Ascending aorta (tissue), 2 donors: ENCODE measurements at regions of chr4 and their contacts with region 1.

Region 1: GRCh38 chr4:123555233-123555806 is 158.7 kb downstream of the SPRY1 start:
- DNase-seq: peak; percentile 21 to 94
- H3K4me3 ChIP-seq: peak overlapping the region in 1 of 2 donors; percentile 56
- H3K27ac ChIP-seq: peak overlapping the region; percentile 83 to 87
- H3K4me1 ChIP-seq: peaks cover 3 to 34% of the 10 kb centered on the region in 2 donors
- H3K27me3 ChIP-seq: no peaks in the 10 kb centered on the region
- CTCF ChIP-seq: no peak

Region 2: DNA sequence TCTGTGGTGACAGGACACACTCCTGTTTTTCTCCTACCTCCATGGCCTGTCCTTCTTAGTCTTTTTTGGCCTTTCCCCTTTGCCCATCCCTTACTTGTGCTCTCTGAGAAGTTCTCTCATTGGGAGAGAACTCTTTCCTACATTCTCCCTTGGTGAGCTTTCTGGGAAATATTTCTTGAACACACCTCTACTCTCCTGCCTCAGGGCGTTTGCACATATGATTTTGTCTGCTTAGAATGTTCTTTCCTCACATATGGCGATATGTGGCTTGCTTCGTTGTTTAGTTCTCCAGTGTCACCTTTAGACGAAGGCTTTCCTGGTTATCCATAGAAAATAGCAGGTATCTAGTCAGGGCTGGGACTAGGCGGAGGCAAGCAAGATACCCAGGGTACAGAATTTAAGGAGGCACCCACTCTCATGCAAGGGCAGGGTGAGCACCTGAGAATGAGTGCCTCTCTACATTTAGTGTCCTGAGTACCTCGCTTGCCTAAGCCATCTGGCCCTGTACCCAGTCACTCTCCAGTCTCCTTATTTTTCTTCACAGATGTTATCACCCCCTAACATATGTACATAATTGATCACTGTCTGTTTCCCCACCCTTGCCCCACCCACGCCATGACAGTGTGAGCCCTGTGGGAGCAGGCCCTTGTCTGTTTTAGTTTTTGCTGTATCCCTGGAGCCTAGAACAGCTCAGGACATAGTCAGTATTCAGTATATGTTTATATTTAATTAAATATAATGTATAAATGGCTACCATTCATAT is 45.3 kb before region 1 on chr4:
- intact Hi-C with region 1: loop called (anchors 2 kb)
- DNase-seq: no peak
- H3K4me3 ChIP-seq: no peak overlapping the region
- H3K27ac ChIP-seq: no peak overlapping the region
- H3K4me1 ChIP-seq: no peaks in the 10 kb centered on the region
- H3K27me3 ChIP-seq: no peaks in the 10 kb centered on the region
- CTCF ChIP-seq: no peak

Region 3: GRCh38 chr4:123631786-123632692 is 76.7 kb after region 1 on chr4:
- intact Hi-C with region 1: no loop called
- DNase-seq: no peak
- H3K4me3 ChIP-seq: no peak overlapping the region
- H3K27ac ChIP-seq: no peak overlapping the region
- H3K4me1 ChIP-seq: no peaks in the 10 kb centered on the region
- H3K27me3 ChIP-seq: no peaks in the 10 kb centered on the region
- CTCF ChIP-seq: no peak

Region 4: DNA sequence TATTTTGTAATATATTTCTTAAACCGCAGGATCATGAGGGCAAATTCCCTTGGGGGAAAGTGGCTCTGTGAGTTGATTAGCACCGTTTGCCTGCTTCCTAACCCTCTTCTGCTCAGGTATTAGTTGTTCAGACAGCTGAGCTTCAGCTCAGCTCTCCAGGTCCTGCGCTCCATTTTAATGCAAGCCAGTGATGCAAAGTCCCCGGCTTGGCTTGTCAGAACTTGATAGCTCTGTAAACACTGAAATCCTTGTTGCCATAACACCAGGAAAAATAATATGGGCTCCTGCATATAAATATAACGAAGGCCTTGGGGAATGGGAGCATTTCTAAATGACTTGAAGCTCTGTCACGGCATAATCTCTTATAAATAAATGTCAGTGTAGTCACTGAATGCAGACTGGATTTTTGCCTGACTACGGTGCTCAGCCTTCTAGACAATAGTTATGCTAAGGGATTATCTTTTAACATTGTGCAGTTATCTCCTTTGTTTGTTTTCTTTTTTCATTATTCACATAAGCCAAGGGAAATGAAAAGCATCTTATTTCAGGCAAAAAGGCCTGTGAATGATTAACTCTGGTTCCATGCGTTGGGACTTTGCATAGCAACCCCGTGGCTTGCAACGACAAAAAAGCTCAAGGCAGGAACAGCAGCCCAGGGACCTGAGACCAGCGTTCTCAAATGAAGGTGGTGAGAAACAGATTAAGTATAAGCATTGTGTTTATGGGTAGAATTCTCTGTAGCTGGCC is 94.5 kb after region 1 on chr4:
- intact Hi-C with region 1: loop called (anchors 2 kb)
- DNase-seq: peak in 1 of 2 donors; percentile 70
- H3K4me3 ChIP-seq: peak overlapping the region; percentile 7 to 17
- H3K27ac ChIP-seq: peak overlapping the region; percentile 73 to 78
- H3K4me1 ChIP-seq: peaks cover 3 to 40% of the 10 kb centered on the region in 2 donors
- H3K27me3 ChIP-seq: no peaks in the 10 kb centered on the region
- CTCF ChIP-seq: no peak

Region 5: GRCh38 chr4:123731035-123731434 is 175.7 kb after region 1 on chr4:
- intact Hi-C with region 1: no loop called
- DNase-seq: no peak
- H3K4me3 ChIP-seq: no peak overlapping the region
- H3K27ac ChIP-seq: no peak overlapping the region
- H3K4me1 ChIP-seq: no peaks in the 10 kb centered on the region
- H3K27me3 ChIP-seq: no peaks in the 10 kb centered on the region
- CTCF ChIP-seq: no peak

Region 6: DNA sequence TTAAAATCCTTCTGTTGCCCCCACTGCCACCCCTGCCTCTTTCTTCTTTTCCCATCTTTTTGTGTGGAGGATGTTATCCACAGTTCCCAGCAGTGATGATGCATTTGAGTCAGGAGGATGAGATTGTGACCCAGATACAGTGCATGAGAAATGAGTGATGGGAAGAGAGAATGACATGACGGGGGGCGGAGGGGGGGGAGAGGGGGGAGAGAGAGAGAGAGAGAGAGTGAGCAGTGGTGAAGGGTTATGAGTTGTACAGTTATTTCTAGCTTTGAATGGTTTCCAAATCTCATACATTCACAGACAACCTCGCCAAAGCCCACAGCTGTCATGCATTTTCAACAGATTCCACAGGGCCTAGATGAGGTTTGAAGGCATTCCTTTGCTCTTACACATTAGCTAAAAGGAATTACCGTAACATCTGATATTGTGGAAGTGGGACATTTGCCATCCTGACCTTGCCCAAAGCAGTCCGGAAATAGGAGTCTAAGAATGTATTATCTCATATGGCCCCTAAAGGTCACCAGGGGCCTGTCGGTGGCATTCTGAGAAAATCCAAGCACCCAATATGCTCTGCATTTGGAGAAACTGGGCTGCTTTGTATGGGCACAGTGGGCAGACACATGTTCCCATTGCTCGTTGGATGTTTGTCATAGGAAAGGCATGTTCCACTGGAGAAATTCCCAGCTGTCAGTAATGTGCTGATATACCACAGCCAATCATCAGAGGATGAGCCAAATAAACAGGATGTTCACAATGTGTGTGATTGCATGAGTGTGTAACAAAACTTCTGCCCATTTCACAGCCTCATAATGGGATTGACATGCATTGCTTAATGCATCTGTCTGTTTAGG is 277.1 kb after region 1 on chr4:
- intact Hi-C with region 1: loop called (anchors 5 kb)
- DNase-seq: peak in 1 of 2 donors; percentile 82
- H3K4me3 ChIP-seq: no peak overlapping the region
- H3K27ac ChIP-seq: peak overlapping the region; percentile 56 to 76
- H3K4me1 ChIP-seq: peaks cover 3 to 19% of the 10 kb centered on the region in 2 donors
- H3K27me3 ChIP-seq: no peaks in the 10 kb centered on the region
- CTCF ChIP-seq: no peak

Region 7: DNA sequence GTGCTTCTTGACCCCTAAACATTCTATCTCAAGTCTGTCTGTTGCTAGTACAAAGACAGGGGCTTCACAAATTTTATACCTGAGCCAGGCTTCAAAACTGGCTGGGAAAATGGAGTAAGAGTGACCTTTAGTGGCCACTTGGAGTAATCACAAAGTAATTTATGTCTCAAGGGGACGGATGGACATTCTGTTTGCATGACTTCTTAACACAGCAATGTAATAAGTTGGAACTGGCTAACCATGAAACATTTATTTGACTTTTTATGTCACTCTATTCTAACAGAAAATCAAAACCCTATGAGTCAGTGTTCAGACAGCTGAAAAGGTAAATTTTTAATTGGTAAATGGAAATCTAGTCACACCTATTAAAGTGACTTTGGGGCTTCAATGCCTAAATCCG is 556.6 kb after region 1 on chr4:
- intact Hi-C with region 1: loop called (anchors 10 kb)
- DNase-seq: no peak
- H3K4me3 ChIP-seq: no peak overlapping the region
- H3K27ac ChIP-seq: no peak overlapping the region
- H3K4me1 ChIP-seq: no peaks in the 10 kb centered on the region
- H3K27me3 ChIP-seq: no peaks in the 10 kb centered on the region
- CTCF ChIP-seq: peak; percentile 43 to 65 (median 52)

Region 8: DNA sequence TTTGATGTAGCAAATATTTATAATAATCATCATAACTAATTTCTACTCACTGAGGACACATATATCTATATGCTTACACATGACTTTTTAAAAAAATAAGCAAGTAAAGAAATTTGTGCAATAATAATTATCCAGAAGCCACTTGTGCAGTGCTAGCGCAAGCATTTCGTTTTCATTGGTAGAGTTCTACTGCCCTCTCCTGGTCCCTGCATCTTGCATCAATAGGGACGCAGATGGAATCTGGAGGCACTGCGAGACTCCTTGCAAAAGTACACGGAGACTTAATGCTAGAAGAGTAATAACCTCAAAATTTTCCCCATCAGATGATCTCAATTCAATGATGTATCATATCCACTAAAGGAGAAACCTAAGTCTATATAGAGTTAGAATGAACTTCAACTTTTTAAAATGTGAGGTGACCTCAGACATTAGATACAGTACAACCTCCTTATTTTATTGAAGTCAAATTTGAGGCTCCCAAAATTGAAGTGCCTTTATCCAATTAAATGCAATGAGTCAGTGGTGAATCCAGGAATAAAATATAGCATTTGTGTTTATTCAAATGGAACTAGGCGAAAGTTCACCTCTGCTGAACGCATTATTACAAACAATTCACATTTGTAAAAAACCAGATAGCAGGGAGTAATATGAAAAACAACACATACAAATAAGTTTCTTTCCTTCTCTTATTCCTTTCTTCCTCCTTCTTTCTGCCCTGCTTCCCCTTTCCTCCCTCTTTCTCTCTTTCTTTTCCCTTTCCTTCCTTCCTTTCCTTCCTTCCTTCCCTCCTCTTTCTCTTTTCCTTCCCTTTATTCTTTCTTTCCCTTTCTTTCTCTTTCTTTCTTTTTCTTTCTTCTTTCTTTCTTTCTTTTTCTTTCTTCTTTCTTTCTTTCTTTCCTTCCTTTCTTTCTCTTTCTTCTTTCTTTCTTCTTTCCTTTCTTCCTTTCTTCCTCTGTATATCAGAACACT is 707.2 kb after region 1 on chr4:
- intact Hi-C with region 1: loop called (anchors 10 kb)
- DNase-seq: peak in 1 of 2 donors; percentile 82
- H3K4me3 ChIP-seq: no peak overlapping the region
- H3K27ac ChIP-seq: no peak overlapping the region
- H3K4me1 ChIP-seq: no peaks in the 10 kb centered on the region
- H3K27me3 ChIP-seq: no peaks in the 10 kb centered on the region
- CTCF ChIP-seq: peak; percentile 61 to 86 (median 79)